ENCODE measurements at regions of chr3 and their contacts with region 1.

Region 1: GRCh38 chr3:172341482-172342059 is 106.7 kb downstream of the GHSR start:
- DNase-seq: no peak
- ATAC-seq: peak; percentile 72
- H3K4me3 Mint-ChIP-seq: no peak overlapping the region
- H3K27ac Mint-ChIP-seq: no peak overlapping the region
- H3K4me1 Mint-ChIP-seq: no peaks in the 10 kb centered on the region
- H3K27me3 Mint-ChIP-seq: no peaks in the 10 kb centered on the region

Region 2: DNA sequence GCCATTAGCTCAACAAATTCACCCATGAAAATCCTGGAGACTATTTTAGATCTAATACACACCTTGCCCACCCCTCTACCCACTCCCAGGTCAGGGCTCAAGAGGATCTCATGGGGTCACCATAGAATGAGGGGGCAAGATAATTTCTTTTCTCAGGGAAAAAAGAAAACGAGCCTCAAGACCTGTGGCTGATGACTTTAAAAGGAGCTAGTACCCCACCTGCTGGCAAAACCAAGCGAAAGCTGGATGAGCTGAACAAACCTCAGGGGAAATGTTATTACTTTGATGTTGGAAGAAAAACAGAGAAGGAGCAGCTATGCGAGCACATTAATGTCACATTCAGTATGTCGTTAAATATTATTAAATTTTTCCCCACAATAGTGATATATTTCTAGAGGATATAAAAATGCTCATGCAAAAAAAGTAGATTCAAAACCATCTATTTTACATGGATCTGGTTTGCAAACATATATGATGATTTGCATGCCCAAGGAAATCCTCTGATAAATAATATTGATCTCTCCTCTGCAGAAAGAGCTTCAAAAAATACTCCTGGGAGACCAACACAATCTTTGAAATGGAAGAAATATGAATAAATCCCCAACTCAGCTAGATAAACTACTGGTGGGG is 569.0 kb before region 1 on chr3:
- CTCF ChIA-PET with region 1: interaction called, 10 read pairs
- DNase-seq: peak; percentile 53
- ATAC-seq: peak; percentile 49
- H3K4me3 Mint-ChIP-seq: no peak overlapping the region
- H3K27ac Mint-ChIP-seq: no peak overlapping the region
- H3K4me1 Mint-ChIP-seq: no peaks in the 10 kb centered on the region
- H3K27me3 Mint-ChIP-seq: peaks cover 32% of the 10 kb centered on the region

Region 3: DNA sequence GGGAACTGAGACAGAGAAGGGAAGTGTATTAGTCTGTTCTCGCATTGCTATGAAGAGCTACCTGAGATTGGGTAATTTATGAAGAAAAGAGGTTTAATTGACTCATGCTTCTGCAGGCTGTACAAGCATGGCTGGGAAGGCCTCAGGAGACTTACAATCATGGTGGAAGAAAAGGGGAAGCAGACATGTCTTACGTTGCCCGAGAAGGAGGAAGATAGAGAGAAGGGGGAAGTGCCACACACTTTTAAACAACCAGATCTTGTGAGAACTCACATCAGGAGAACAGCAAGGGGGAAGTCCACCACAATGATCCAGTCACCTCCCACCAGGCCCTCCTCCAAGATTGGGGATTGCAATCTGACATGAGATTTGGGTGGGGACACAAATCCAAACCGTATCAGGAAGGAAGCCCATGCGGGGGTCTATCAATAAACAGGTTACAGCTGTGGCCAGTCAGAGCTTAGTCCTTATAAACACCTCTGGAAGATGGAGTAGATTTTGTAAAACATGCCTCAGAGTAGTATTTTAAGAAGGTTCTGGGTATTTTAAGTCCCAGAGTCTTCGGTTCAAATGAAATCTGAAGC is 47.3 kb before region 1 on chr3:
- CTCF ChIA-PET with region 1: no interaction called
- DNase-seq: no peak
- ATAC-seq: no peak
- H3K4me3 Mint-ChIP-seq: no peak overlapping the region
- H3K27ac Mint-ChIP-seq: no peak overlapping the region
- H3K4me1 Mint-ChIP-seq: peaks cover 6% of the 10 kb centered on the region
- H3K27me3 Mint-ChIP-seq: no peaks in the 10 kb centered on the region

Region 4: DNA sequence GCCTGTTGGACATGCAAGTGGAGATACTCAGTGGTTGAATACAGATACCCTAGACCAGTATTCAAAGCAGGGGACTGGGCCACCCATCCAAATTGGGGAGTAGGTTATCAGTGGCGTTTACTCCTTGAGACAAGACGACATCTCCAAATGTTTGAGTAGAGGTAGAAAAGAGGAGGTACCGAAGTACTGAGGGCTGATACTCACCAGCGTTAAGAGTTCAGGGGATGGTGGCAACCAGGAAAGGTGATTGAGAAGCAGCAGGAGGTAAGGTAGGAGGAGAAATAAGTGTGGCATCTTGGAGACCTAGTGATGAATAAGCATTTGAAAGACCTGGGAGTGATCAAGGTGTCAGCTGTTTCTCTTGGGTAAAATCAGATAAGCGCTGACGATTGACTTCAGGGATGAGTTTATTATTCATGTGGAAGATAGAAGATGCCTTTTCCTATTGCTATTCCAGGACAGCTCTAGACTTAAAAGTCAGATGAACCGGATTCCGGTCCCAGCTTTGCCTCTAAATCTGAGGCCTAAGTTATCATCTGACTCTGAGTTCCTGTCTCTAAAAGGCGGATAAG is 10.4 kb after region 1 on chr3:
- CTCF ChIA-PET with region 1: interaction called, 11 read pairs
- DNase-seq: no peak
- ATAC-seq: no peak
- H3K4me3 Mint-ChIP-seq: no peak overlapping the region
- H3K27ac Mint-ChIP-seq: no peak overlapping the region
- H3K4me1 Mint-ChIP-seq: peaks cover 5% of the 10 kb centered on the region
- H3K27me3 Mint-ChIP-seq: no peaks in the 10 kb centered on the region

Region 5: DNA sequence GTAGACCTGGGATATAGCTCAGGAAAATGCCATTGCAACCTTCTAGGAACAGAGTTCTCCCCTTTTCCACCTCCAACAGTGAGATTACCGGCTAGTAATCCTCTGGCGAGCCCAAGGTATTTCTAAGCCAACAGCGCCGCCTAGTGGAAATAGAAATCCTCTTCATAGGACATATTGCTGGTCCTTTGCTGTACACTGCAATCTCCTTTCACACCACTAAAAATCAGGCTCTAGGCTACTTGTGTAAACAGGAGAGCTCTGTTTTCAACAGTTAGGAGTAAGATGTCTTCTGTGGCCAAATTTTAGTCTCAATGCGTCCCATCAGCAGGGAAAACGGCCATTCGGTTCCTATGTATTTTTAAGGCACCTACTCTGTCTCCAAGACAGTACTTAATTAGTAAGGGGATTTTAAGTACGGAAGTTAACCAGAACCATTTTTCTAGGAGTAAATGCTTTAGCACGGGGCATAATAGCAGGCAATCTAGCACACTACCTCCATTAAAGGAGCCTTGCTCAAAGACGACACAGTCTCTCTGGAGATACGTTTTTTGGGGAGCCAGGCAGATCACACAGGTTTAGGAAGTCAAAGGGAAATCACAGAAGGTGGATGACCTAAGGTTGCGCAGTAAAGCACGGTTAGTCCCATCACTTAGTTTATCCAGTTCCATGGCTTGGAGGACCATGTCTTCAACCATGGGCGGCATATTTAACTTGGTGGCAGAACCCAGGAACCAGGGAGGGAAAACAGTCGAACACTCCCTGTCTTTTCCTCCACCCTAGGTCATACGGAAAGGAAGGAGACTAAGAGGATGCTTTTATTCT is 325.5 kb after region 1 on chr3:
- CTCF ChIA-PET with region 1: interaction called, 15 read pairs
- DNase-seq: peak; percentile 88
- ATAC-seq: peak; percentile 100
- H3K4me3 Mint-ChIP-seq: no peak overlapping the region
- H3K27ac Mint-ChIP-seq: no peak overlapping the region
- H3K4me1 Mint-ChIP-seq: peaks cover 18% of the 10 kb centered on the region
- H3K27me3 Mint-ChIP-seq: no peaks in the 10 kb centered on the region

Measured in activated CD8-positive, alpha-beta memory T cell treated with anti-CD3 and anti-CD28 coated beads, Interleukin-2, amount 10 ng/mL, durations not matched to agents 7 days and 5 days (primary cell).